ENCODE measurements at regions of chr5 and their contacts with region 1.

Region 1: DNA sequence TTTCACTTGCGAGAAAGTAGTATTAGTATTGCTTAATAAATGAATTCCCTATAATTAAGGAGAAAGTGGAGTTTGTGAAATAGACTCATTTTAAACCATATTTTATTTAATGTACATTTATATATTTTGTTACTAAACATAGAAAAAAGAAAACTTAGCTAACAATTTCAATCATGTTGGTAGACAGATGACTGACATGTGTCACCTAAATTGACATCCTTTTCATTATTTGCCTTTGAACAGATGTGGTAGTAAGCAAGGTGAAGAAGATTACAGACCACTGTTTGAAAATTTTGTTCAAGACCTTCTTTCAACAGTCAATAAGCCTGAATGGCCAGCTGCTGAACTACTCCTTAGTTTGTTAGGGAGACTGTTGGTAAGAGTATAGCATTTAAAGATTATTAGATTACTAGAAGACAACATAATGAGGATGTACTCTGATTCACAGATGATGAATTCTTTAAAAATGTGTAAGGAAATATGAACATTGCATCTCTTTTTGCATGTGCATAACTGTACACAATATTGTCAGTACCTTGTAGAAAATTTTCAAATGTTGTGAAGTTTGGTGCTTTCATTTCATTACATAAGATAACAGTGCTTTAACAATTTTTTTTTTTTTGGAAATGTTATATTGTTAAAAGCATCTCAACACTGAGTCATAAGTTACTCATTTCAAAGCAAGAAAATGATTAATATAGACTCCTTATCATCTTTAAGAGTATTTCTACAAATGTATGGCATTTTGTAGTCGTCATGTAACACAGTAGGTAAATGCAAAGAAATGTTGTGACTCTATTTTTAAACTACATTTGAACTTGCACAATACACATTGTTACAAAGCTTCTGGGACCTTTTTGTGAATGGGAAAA is 139.5 kb downstream of the NIPBL start:
- DNase-seq: no peak
- ATAC-seq: no peak
- H3K4me3 ChIP-seq: no peak overlapping the region
- H3K4me3 Mint-ChIP-seq: no peak overlapping the region
- H3K27ac ChIP-seq: no peak overlapping the region
- H3K27ac Mint-ChIP-seq: no peak overlapping the region
- H3K4me1 ChIP-seq: no peaks in the 10 kb centered on the region
- H3K4me1 Mint-ChIP-seq: no peaks in the 10 kb centered on the region
- H3K27me3 ChIP-seq: no peaks in the 10 kb centered on the region
- H3K27me3 Mint-ChIP-seq: no peaks in the 10 kb centered on the region
- CTCF ChIP-seq: no peak

Region 2: GRCh38 chr5:35990941-35991611 is 1025.0 kb before region 1 on chr5 and contains the start of gene UGT3A1:
- CTCF ChIA-PET with region 1: no interaction called
- POLR2A ChIA-PET with region 1: no interaction called
- intact Hi-C with region 1: no loop called
- DNase-seq: no peak
- ATAC-seq: no peak
- H3K4me3 ChIP-seq: no peak within 1 kb of the TSS
- H3K4me3 Mint-ChIP-seq: no peak within 1 kb of the TSS
- H3K27ac ChIP-seq: no peak within 1 kb of the TSS
- H3K27ac Mint-ChIP-seq: no peak within 1 kb of the TSS
- H3K4me1 ChIP-seq: no peaks in the 10 kb centered on the region
- H3K4me1 Mint-ChIP-seq: no peaks in the 10 kb centered on the region
- H3K27me3 ChIP-seq: peaks cover 0 to 3% (median 0%) of the 10 kb centered on the region in 4 experiments
- H3K27me3 Mint-ChIP-seq: peaks cover 11% of the 10 kb centered on the region
- CTCF ChIP-seq: no peak
- total RNA-seq, gene UGT3A1: not detected in 2 replicates

Region 3: DNA sequence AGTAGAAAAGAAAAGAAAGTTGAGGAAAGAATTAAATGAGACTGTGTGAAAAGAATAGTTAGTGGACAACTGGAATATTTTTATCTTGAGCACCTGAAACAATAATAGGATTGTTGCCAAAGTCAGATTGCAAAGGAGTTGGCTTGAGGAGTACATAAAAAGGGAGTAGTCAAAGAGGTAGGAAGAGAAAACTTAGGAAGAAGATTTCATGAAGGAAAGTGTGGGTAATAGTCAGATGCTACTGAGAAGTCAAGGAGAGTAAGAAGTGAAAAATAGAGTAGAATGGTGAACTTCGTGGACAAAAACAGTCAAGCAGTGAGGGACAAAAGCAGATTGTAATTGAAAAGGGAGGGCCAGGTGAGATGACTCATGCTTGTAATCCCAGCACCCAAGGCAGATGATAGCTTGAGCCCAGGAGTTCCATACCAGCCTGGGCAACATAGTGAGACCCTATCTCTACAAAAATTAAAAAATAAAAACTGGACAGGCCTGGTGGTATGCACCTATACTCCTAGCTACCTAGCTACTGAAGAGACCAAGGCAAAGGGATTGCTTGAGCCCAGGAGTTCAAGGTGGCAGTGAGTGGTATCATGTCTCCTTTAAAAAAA is 39.5 kb after region 1 on chr5:
- CTCF ChIA-PET with region 1: interaction called, 3 read pairs
- POLR2A ChIA-PET with region 1: no interaction called
- intact Hi-C with region 1: loop called (anchors 5 kb)
- DNase-seq: no peak
- ATAC-seq: no peak
- H3K4me3 ChIP-seq: no peak overlapping the region
- H3K4me3 Mint-ChIP-seq: no peak overlapping the region
- H3K27ac ChIP-seq: no peak overlapping the region
- H3K27ac Mint-ChIP-seq: no peak overlapping the region
- H3K4me1 ChIP-seq: no peaks in the 10 kb centered on the region
- H3K4me1 Mint-ChIP-seq: no peaks in the 10 kb centered on the region
- H3K27me3 ChIP-seq: no peaks in the 10 kb centered on the region
- H3K27me3 Mint-ChIP-seq: no peaks in the 10 kb centered on the region
- CTCF ChIP-seq: no peak

Region 4: GRCh38 chr5:37326536-37326935 is 310.5 kb after region 1 on chr5:
- CTCF ChIA-PET with region 1: no interaction called
- POLR2A ChIA-PET with region 1: no interaction called
- intact Hi-C with region 1: loop called (anchors 10 kb)
- DNase-seq: no peak
- ATAC-seq: no peak
- H3K4me3 ChIP-seq: no peak overlapping the region
- H3K4me3 Mint-ChIP-seq: no peak overlapping the region
- H3K27ac ChIP-seq: no peak overlapping the region
- H3K27ac Mint-ChIP-seq: no peak overlapping the region
- H3K4me1 ChIP-seq: no peaks in the 10 kb centered on the region
- H3K4me1 Mint-ChIP-seq: no peaks in the 10 kb centered on the region
- H3K27me3 ChIP-seq: no peaks in the 10 kb centered on the region
- H3K27me3 Mint-ChIP-seq: no peaks in the 10 kb centered on the region
- CTCF ChIP-seq: no peak

Measured in B cell (primary cell).